Activated T-helper 1 cell treated with anti-CD3 and anti-CD28 coated beads, Interleukin-12 subunit alpha, Interleukin-12 subunit beta, Interleukin-2, Interleukin-4 antibody, amounts not matched to agents 30 ng/mL and 10 ng/mL and 1 ng/mL, durations not matched to agents 14 hours and 24 hours and 36 hours (primary cell): ENCODE measurements at regions of chr4 and their contacts with region 1.

Region 1: GRCh38 chr4:55948726-55949474 is at the start of gene CEP135:
- DNase-seq: peak; percentile 91
- H3K4me3 Mint-ChIP-seq: peak within 1 kb of the TSS; percentile 86
- H3K27ac Mint-ChIP-seq: peak within 1 kb of the TSS; percentile 92
- H3K4me1 Mint-ChIP-seq: peaks cover 44% of the 10 kb centered on the region
- H3K27me3 Mint-ChIP-seq: no peaks in the 10 kb centered on the region
- total RNA-seq, gene CEP135: 19.3 and 19.9 TPM in 2 replicates

Region 2: DNA sequence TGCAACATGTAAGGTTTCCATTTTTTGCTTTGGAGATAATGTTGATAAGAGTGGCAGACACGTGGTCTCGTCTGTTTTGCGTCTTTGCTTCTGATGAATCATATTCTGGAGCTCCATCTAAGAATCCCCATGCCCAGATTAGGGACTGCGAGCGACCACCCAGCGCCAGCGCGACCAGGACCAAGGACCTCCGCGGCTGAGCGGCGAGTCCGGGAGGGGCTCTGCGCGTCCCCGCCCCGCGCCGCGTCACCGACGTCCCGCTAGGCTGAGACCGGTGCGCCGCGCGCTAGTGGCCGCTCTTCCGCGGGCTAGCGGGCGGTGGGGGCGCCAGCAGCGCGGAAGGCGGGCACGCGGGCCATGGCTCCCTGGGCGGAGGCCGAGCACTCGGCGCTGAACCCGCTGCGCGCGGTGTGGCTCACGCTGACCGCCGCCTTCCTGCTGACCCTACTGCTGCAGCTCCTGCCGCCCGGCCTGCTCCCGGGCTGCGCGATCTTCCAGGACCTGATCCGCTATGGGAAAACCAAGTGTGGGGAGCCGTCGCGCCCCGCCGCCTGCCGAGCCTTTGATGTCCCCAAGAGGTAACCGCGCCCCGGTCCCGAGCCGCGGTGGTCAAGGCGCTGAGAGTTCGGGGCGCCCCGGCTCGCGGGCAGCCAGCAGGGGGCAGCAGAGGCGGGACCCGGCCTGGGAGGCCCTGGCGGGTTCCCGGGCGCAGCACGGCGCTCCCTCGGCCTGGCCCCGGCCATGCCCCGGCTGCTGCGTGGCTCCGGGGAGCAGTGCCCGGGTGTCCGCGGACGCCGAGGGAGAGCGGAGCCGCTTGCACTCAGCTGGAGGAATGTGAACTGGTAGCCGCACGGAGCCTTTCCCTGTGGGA is 602.7 kb before region 1 on chr4 and contains the start of gene SRD5A3:
- intact Hi-C with region 1: loop called (anchors 5 kb)
- DNase-seq: peak; percentile 74
- H3K4me3 Mint-ChIP-seq: peak within 1 kb of the TSS; percentile 89
- H3K27ac Mint-ChIP-seq: peak within 1 kb of the TSS; percentile 92
- H3K4me1 Mint-ChIP-seq: peaks cover 36% of the 10 kb centered on the region
- H3K27me3 Mint-ChIP-seq: no peaks in the 10 kb centered on the region
- total RNA-seq, gene SRD5A3: 32.4 and 33.2 TPM in 2 replicates

Region 3: GRCh38 chr4:55808186-55808585 is 140.7 kb before region 1 on chr4:
- intact Hi-C with region 1: no loop called
- DNase-seq: no peak
- H3K4me3 Mint-ChIP-seq: no peak overlapping the region
- H3K27ac Mint-ChIP-seq: no peak overlapping the region
- H3K4me1 Mint-ChIP-seq: no peaks in the 10 kb centered on the region
- H3K27me3 Mint-ChIP-seq: peaks cover 7% of the 10 kb centered on the region

Region 4: DNA sequence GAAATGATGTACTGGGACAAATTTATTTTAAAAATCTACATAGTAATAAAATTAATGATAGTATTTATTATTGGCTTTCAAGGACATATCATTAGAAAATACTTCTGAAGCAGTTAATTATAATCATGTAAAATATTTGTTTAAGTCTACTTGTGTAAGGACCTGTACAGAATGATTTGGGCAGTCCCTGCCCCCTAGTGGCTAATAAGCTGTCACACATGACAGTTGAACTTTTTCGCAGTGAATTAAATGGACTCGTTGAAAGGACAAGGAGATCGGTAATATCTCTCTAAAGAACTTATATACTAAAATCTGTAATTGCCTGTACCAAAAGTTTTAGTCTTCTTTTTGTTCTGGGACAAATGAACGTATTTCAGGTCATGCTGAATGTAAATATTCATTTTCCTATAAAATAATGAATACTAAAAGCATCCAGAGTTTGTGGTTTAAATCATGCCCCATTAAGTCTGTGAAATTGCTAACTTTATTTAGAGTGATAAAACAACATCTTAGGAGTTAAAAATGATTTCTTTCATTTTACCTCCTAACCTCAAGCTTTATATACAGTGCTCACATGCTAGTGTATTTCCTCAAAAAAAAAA is 81.8 kb before region 1 on chr4:
- intact Hi-C with region 1: loop called (anchors 2 kb)
- DNase-seq: no peak
- H3K4me3 Mint-ChIP-seq: no peak overlapping the region
- H3K27ac Mint-ChIP-seq: peak overlapping the region; percentile 24
- H3K4me1 Mint-ChIP-seq: peaks cover 21% of the 10 kb centered on the region
- H3K27me3 Mint-ChIP-seq: no peaks in the 10 kb centered on the region

Region 5: GRCh38 chr4:56048702-56049431 is 100.0 kb after region 1 on chr4:
- intact Hi-C with region 1: loop called (anchors 1 kb)
- DNase-seq: peak; percentile 50
- H3K4me3 Mint-ChIP-seq: peak overlapping the region; percentile 77
- H3K27ac Mint-ChIP-seq: no peak overlapping the region
- H3K4me1 Mint-ChIP-seq: peaks cover 13% of the 10 kb centered on the region
- H3K27me3 Mint-ChIP-seq: peaks cover 50% of the 10 kb centered on the region

Region 6: GRCh38 chr4:56301181-56302076 is 352.5 kb after region 1 on chr4:
- intact Hi-C with region 1: loop called (anchors 1 kb)
- DNase-seq: peak; percentile 49
- H3K4me3 Mint-ChIP-seq: peak overlapping the region; percentile 38
- H3K27ac Mint-ChIP-seq: no peak overlapping the region
- H3K4me1 Mint-ChIP-seq: peaks cover 11% of the 10 kb centered on the region
- H3K27me3 Mint-ChIP-seq: peaks cover 2% of the 10 kb centered on the region

Region 7: DNA sequence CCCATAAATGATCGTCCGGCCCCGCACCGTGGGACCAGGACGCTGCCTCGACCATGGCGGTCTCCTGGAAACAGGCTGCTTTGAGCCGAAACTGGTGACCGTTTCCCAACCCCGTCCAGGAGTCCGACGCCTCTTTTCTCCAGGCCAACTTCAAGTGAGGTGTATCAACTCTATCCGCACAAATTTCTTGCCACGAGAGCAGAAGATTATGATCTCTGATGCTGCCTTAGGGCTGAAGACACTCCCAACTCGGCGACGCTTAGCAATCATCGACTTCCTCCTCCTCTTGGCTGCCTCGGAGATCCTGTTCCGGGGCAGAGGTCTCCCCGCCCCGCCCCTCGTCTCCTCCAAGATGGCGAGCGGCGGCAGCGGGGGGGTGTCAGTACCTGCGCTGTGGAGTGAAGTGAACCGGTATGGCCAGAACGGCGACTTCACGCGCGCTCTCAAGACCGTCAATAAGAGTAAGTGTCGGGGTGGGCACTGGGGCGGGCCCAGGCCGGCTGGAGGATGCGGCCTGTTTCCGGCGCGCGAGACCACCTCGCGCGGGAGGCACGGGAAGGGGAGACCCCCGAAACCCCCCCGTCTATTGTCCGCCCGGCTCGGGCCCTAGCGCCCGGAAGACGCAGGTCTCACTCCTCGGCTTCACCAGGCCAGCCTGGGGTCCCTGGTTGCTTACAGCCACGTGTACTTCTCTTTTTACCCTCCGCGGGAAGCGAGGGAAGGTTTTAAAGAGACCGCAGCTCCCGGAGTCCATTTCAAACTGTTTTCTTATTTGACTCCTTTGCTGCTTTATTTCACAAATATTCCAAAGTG is 518.6 kb after region 1 on chr4 and contains the start of gene SRP72:
- intact Hi-C with region 1: loop called (anchors 2 kb)
- DNase-seq: peak; percentile 88
- H3K4me3 Mint-ChIP-seq: peak within 1 kb of the TSS; percentile 98
- H3K27ac Mint-ChIP-seq: peak within 1 kb of the TSS; percentile 99
- H3K4me1 Mint-ChIP-seq: peaks cover 60% of the 10 kb centered on the region
- H3K27me3 Mint-ChIP-seq: no peaks in the 10 kb centered on the region
- total RNA-seq, gene SRP72: 199 and 211 TPM in 2 replicates

Region 8: DNA sequence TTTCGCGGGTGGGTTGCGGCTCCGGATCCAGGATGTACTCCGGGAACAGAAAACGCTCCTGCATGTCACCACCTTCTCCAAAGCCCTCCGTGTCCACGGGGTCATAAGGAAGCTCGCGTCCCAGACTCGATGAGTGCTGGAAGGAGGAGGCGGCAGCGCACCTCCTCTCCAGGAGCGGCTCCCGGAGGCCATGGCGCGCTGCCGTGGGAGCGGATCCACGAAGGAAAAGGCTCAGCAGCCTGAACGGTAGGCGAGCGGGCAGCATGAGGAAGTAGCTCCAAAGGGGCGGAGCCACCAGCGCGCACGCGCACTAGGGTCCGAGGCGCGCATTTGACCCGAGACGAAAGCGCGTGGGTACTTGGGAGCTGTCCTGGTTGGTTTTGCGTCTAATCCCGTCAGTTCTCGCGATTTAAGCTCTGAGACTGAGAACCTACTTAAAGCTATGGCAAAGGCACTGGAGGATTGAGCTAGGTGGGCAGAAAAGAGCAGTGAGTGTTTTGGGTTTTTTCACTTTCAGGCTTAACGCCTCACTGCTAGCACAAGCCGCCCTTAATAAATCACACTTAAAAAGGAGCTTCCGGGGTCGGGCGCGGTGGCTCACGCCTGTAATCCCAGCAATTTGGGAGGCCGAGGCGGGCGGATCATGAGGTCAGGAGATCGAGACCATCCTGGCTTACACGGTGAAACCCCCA is 1028.6 kb after region 1 on chr4 and contains the start of gene NOA1:
- intact Hi-C with region 1: loop called (anchors 1 kb)
- DNase-seq: peak; percentile 98
- H3K4me3 Mint-ChIP-seq: peak within 1 kb of the TSS; percentile 100
- H3K27ac Mint-ChIP-seq: peak within 1 kb of the TSS; percentile 100
- H3K4me1 Mint-ChIP-seq: peaks cover 51% of the 10 kb centered on the region
- H3K27me3 Mint-ChIP-seq: no peaks in the 10 kb centered on the region
- total RNA-seq, gene NOA1: 17.7 and 18.3 TPM in 2 replicates